ENCODE measurements at regions of chr3 and their contacts with region 1.

Region 1: DNA sequence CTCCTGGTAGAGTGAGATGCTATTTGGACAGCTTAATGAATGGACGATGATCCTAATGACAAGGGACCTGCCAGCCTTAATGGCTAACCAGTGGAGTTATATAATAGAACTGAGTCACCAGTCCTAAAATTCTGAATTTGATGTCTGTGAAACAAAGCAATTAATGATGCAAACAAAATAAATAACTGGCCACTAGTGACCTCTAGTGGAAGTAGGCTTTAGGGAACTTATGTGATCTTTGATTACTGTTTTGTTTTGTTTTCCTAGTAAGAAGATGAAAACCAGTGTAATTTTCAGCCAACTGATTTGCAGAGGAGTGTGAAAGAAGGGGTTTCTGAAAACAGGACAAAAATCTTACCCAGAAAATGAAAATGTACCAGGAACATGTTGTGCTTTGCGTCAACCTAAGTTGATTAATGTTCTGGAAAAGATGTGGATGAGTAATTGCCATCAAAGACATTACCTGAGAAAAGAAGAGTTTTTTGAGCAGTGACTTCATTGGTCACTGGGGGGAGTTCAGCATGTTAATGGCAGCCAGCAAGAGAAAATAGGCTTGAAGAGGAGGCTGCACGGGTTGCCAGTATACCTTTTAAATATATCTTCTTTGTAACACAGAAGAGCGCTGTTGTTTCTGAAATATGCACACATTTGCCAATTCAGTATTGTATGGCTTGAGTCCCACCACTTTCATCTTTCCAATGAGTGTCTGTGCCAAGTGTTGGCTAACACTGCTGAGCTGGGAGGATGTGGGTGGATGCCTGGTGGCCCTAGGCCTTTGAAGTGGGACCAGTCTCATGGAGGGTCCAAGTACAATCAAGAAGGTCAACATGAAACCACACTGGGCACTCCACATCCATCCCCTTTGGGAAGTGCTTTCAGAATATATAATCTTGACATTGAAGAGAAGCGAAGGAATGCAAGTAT is 9.3 kb downstream of the VEPH1 start:
- DNase-seq: peak; percentile 30 to 64 (median 57)
- H3K4me3 ChIP-seq: no peak overlapping the region
- H3K4me3 Mint-ChIP-seq: no peak overlapping the region
- H3K27ac ChIP-seq: no peak overlapping the region
- H3K27ac Mint-ChIP-seq: no peak overlapping the region
- H3K4me1 ChIP-seq: no peaks in the 10 kb centered on the region
- H3K4me1 Mint-ChIP-seq: peaks cover 3% of the 10 kb centered on the region
- H3K27me3 ChIP-seq: peaks cover 8 to 9% of the 10 kb centered on the region in 2 donors
- H3K27me3 Mint-ChIP-seq: peaks cover 6 to 18% (median 13%) of the 10 kb centered on the region in 3 donors
- CTCF ChIP-seq: peak; percentile 86

Region 2: DNA sequence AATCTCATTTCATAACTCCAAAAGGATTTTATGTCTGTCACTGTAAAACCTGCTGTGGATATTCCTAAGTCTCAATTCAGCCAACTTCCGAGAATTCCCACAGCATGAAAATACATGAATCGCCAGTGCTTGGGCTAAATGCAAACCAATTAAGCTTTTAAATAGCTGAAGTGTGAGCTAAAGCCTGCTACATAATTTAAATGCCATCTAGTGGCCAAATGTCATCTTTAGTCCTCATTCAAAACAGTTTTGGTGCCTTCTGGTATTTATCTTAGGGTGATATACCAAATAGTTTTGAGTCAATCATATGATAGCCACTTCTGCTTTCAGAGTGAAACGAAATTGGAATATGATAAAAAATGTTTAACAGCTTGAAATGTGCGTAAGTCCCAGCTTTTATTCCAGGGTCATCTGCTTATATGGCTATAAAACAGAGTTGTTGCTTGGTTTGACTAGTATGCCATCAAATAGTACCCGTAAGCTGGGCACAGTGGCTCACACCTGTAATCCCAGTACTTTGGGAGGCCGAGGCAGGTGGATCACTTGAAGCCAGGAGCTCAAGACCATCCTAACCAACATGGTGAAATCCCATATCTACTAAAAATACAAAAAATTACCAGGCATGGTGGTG is 292.1 kb before region 1 on chr3:
- intact Hi-C with region 1: loop called (anchors 5 to 10 kb)
- DNase-seq: peak; percentile 24 to 69 (median 55)
- H3K4me3 ChIP-seq: no peak overlapping the region
- H3K4me3 Mint-ChIP-seq: no peak overlapping the region
- H3K27ac ChIP-seq: no peak overlapping the region
- H3K27ac Mint-ChIP-seq: no peak overlapping the region
- H3K4me1 ChIP-seq: no peaks in the 10 kb centered on the region
- H3K4me1 Mint-ChIP-seq: no peaks in the 10 kb centered on the region
- H3K27me3 ChIP-seq: no peaks in the 10 kb centered on the region
- H3K27me3 Mint-ChIP-seq: peaks cover 0 to 3% (median 2%) of the 10 kb centered on the region in 3 donors
- CTCF ChIP-seq: peak; percentile 37